Endothelial cell of umbilical vein (primary cell): ENCODE measurements at regions of chr1 and their contacts with region 1.

Region 1: GRCh38 chr1:203625628-203626019 is 1.0 kb upstream of the ATP2B4 start:
- DNase-seq: peak; percentile 89
- H3K4me3 ChIP-seq: no peak overlapping the region
- H3K27ac ChIP-seq: no peak overlapping the region
- H3K4me1 ChIP-seq: peaks cover 40% of the 10 kb centered on the region
- H3K27me3 ChIP-seq: no peaks in the 10 kb centered on the region
- CTCF ChIP-seq: peak; percentile 37 to 39
- POLR2A ChIP-seq: no peak

Region 2: GRCh38 chr1:202680586-202681352 is 944.9 kb before region 1 on chr1:
- CTCF ChIA-PET with region 1: no interaction called
- POLR2A ChIA-PET with region 1: no interaction called
- dilution Hi-C with region 1: no loop called
- intact Hi-C with region 1: no loop called
- DNase-seq: no peak
- H3K4me3 ChIP-seq: no peak overlapping the region
- H3K27ac ChIP-seq: no peak overlapping the region
- H3K4me1 ChIP-seq: no peaks in the 10 kb centered on the region
- H3K27me3 ChIP-seq: peaks cover 12 to 16% of the 10 kb centered on the region in 2 experiments
- CTCF ChIP-seq: no peak
- POLR2A ChIP-seq: no peak

Region 3: GRCh38 chr1:203304919-203305808 is 320.5 kb before region 1 on chr1 and contains the start of gene BTG2:
- CTCF ChIA-PET with region 1: no interaction called
- POLR2A ChIA-PET with region 1: no interaction called
- dilution Hi-C with region 1: no loop called
- intact Hi-C with region 1: no loop called
- DNase-seq: peak; percentile 91
- H3K4me3 ChIP-seq: peak within 1 kb of the TSS; percentile 70 to 97 (median 73)
- H3K27ac ChIP-seq: peak within 1 kb of the TSS; percentile 42
- H3K4me1 ChIP-seq: peaks cover 19% of the 10 kb centered on the region
- H3K27me3 ChIP-seq: peaks cover 4 to 7% of the 10 kb centered on the region in 2 experiments
- CTCF ChIP-seq: no peak
- POLR2A ChIP-seq: peak; percentile 99
- total RNA-seq, gene BTG2: 40.3 and 50.1 TPM in 2 replicates

Region 4: GRCh38 chr1:203504397-203505250 is 121.0 kb before region 1 on chr1:
- CTCF ChIA-PET with region 1: interaction called, 62 read pairs
- POLR2A ChIA-PET with region 1: no interaction called
- dilution Hi-C with region 1: no loop called
- intact Hi-C with region 1: loop called (anchors 1 kb)
- DNase-seq: peak; percentile 73
- H3K4me3 ChIP-seq: no peak overlapping the region
- H3K27ac ChIP-seq: no peak overlapping the region
- H3K4me1 ChIP-seq: peaks cover 4% of the 10 kb centered on the region
- H3K27me3 ChIP-seq: peaks cover 0 to 3% of the 10 kb centered on the region in 2 experiments
- CTCF ChIP-seq: peak; percentile 70 to 75
- POLR2A ChIP-seq: no peak

Region 5: GRCh38 chr1:203592156-203592555 is 33.5 kb before region 1 on chr1:
- CTCF ChIA-PET with region 1: no interaction called
- POLR2A ChIA-PET with region 1: no interaction called
- dilution Hi-C with region 1: no loop called
- intact Hi-C with region 1: no loop called
- DNase-seq: no peak
- H3K4me3 ChIP-seq: no peak overlapping the region
- H3K27ac ChIP-seq: no peak overlapping the region
- H3K4me1 ChIP-seq: peaks cover 4% of the 10 kb centered on the region
- H3K27me3 ChIP-seq: no peaks in the 10 kb centered on the region
- CTCF ChIP-seq: no peak
- POLR2A ChIP-seq: no peak

Region 6: DNA sequence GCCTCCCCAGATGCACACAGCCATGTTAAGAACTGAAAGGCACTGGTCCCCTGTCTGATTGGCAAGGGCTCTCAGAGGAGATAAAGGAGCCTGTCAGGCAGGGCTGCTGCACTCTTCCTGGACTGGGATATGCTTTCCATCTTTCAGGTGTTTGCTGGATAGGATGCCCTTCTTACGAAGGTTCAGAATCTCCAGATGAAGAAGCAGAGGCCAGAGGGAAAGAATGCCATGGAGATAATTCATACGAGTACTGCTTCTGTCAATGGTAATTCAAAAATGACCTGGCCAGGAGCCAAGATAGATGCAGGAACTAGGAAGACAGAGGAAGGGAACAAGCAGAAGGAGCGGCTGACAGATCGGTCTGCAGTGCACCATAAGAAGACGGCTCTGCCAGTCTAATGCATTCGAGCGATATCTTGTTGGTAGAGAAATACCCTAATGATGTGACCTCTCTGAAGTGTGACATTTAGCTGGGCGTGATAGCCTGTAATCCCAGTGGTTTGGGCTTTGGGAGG is 15.6 kb before region 1 on chr1:
- CTCF ChIA-PET with region 1: interaction called, 15 read pairs
- POLR2A ChIA-PET with region 1: no interaction called
- dilution Hi-C with region 1: no loop called
- intact Hi-C with region 1: loop called (anchors 1 kb)
- DNase-seq: no peak
- H3K4me3 ChIP-seq: no peak overlapping the region
- H3K27ac ChIP-seq: no peak overlapping the region
- H3K4me1 ChIP-seq: peaks cover 15% of the 10 kb centered on the region
- H3K27me3 ChIP-seq: no peaks in the 10 kb centered on the region
- CTCF ChIP-seq: no peak
- POLR2A ChIP-seq: no peak

Region 7: DNA sequence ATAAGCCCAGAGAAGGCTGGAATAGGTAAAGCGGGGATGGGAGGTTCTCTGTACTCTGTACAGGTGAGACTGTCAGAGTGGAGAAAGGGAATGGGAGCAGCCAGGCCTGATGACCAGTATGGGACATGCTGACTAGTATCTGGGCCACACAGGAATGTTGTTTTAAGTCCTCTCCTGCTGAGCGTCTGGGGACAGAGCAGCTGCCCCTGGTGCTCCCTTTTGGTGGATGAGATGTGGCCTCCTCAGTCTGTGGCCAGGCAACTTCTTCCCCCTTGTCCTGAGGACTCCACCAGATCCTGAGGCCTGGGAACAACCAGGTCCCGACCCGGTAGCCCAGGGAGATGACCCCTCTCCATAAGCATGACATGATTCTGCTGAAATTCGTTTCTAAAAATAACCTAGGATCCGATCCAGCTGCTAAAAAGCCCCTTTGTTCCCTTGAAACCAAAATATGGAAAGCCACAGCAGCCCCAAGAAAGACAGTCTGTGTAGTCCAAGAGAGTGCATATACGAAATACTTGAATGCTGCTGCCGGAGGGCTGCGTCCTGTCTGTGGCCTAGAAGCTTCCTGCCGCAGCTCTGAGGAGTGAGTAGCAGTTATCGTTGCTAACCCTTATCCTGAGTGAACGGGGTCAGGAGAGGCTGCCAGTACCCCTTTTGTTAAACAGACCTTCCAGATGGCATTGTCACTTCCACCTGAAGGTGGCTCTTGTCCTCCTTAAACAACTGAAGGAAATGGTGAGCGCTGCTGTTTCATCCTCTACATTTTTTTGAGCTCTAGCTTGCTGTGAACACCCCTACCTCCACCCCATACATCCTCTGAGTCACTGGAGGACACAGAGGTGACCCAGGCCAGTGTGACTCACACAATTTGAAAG is 48.2 kb after region 1 on chr1:
- CTCF ChIA-PET with region 1: interaction called, 13 read pairs
- POLR2A ChIA-PET with region 1: interaction called, 3 read pairs
- dilution Hi-C with region 1: no loop called
- intact Hi-C with region 1: loop called (anchors 1 kb)
- DNase-seq: peak; percentile 97
- H3K4me3 ChIP-seq: no peak overlapping the region
- H3K27ac ChIP-seq: peak overlapping the region; percentile 88
- H3K4me1 ChIP-seq: peaks cover 41% of the 10 kb centered on the region
- H3K27me3 ChIP-seq: no peaks in the 10 kb centered on the region
- CTCF ChIP-seq: no peak
- POLR2A ChIP-seq: no peak

Region 8: DNA sequence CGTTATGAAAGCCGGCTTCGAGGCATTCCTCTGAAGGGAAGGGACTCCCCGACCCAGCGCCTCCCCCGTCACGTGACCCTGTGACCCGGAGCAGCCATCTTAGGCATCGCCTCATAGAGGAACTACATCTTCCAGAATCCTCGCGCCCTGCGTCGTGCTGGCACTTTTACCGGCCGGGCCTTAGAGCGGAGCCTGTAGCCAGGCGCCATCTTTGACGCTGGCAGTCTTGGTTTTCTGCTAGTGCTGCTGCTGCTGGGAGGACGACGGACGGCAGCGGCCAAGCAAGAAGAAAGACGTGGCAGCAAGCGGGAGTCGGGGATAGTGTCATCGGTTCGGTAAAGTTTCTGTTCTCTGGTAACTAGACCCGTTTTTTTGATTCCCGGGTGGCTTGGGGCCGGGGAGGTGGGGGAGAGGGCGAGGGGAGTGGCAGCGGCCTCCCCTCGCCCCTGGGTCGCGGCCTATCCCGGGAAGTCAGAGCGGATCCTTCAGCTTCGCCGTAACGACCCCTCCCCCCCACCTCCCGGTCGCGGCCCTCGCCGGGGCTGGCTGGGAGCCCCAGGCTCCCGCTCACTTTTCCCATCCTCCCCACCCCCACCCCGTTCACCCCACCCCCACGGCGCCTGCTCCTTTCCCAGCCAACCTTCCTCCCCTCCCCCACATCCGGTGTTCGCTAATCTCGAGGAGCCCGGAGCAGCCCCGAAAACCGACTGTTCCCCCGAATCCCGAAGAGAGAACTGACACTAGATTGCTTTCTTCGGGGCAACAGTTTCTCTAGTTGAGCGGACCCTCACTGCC is 170.0 kb after region 1 on chr1 and contains the starts of genes ZBED6 and ZC3H11A:
- CTCF ChIA-PET with region 1: no interaction called
- POLR2A ChIA-PET with region 1: no interaction called
- dilution Hi-C with region 1: no loop called
- intact Hi-C with region 1: loop called (anchors 5 kb)
- DNase-seq: peak; percentile 98
- H3K4me3 ChIP-seq: peak within 1 kb of the TSS; percentile 79 to 100 (median 98)
- H3K27ac ChIP-seq: peak within 1 kb of the TSS; percentile 92
- H3K4me1 ChIP-seq: peaks cover 23% of the 10 kb centered on the region
- H3K27me3 ChIP-seq: no peaks in the 10 kb centered on the region
- CTCF ChIP-seq: no peak
- POLR2A ChIP-seq: peak; percentile 55
- total RNA-seq, gene ZBED6: 36.7 and 38.9 TPM in 2 replicates
- total RNA-seq, gene ZC3H11A: 66.6 and 72.6 TPM in 2 replicates

Region 9: GRCh38 chr1:204072931-204073836 is 447.6 kb after region 1 on chr1 and contains the start of gene SOX13:
- CTCF ChIA-PET with region 1: no interaction called
- POLR2A ChIA-PET with region 1: no interaction called
- dilution Hi-C with region 1: no loop called
- intact Hi-C with region 1: loop called (anchors 5 kb)
- DNase-seq: peak; percentile 86
- H3K4me3 ChIP-seq: peak within 1 kb of the TSS; percentile 42 to 73 (median 66)
- H3K27ac ChIP-seq: peak within 1 kb of the TSS; percentile 27
- H3K4me1 ChIP-seq: peaks cover 14% of the 10 kb centered on the region
- H3K27me3 ChIP-seq: no peaks in the 10 kb centered on the region
- CTCF ChIP-seq: peak in 1 of 2 donors; percentile 10
- POLR2A ChIP-seq: peak; percentile 94
- total RNA-seq, gene SOX13: 38.0 and 40.8 TPM in 2 replicates